ENCODE measurements at regions of chr3 and their contacts with region 1.

Region 1: DNA sequence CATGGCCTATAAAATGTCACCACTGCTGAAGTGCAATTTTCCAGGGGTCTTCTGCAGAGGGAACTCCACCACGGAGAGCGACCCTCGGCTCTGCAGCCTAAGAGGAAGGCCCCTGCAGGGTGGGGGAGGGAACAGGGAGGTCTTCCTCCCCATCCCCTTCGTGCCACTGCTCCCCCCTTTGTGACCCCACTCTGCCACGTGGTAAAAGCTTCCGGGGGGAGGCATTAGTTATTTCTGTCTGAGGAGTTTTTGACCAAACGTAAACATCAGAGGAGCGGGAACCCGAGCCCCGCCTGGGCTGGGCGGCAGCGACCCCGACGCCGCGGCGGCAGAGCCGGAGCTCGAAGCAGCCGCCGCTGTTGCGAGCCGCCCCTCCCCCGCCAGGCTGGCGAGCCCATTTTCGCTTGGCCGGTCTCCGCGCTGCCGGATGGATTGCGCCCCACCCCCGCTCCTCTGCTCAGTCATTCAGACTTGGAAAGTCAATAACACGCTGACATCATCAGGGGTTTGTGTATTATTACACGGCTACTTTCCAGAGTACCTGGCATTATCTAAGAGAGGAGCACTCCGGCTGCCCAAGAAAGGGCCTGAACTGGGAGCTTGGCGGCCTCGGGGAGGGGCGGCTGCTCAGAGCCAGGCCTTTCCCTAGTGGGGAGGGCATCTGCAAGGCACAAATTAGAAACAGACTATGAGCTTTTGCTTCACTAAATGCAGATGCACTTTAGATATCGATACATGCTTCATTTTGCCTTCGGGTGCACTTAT is 162.5 kb upstream of the TBL1XR1 start:
- DNase-seq: peak; percentile 98
- H3K4me3 ChIP-seq: peak overlapping the region; percentile 6 to 47 (median 37)
- H3K27ac ChIP-seq: peak overlapping the region; percentile 84 to 91 (median 88)
- H3K4me1 ChIP-seq: peaks cover 0 to 63% (median 58%) of the 10 kb centered on the region in 4 donors
- H3K27me3 ChIP-seq: no peaks in the 10 kb centered on the region
- CTCF ChIP-seq: no peak
- EP300 ChIP-seq: peak; percentile 88 to 98 (median 97)
- POLR2A ChIP-seq: peak in 1 of 2 donors; percentile 43

Region 2: GRCh38 chr3:177197041-177197727 is 162.6 kb before region 1 on chr3 and contains the start of gene TBL1XR1:
- intact Hi-C with region 1: loop called (anchors 1 kb)
- DNase-seq: peak; percentile 97
- H3K4me3 ChIP-seq: peak within 1 kb of the TSS; percentile 91 to 99 (median 97)
- H3K27ac ChIP-seq: peak within 1 kb of the TSS; percentile 98 to 100 (median 99)
- H3K4me1 ChIP-seq: peaks cover 0 to 42% (median 27%) of the 10 kb centered on the region in 4 donors
- H3K27me3 ChIP-seq: no peaks in the 10 kb centered on the region
- CTCF ChIP-seq: no peak
- EP300 ChIP-seq: peak; percentile 25 to 84 (median 69)
- POLR2A ChIP-seq: no peak
- total RNA-seq, gene TBL1XR1: 88.9 to 131 (median 102) TPM

Region 3: GRCh38 chr3:177597311-177598096 is 237.7 kb after region 1 on chr3:
- intact Hi-C with region 1: loop called (anchors 5 kb)
- DNase-seq: peak; percentile 84
- H3K4me3 ChIP-seq: peak overlapping the region in 2 of 4 donors; percentile 0 to 7
- H3K27ac ChIP-seq: peak overlapping the region; percentile 69 to 84 (median 79)
- H3K4me1 ChIP-seq: peaks cover 0 to 68% (median 55%) of the 10 kb centered on the region in 4 donors
- H3K27me3 ChIP-seq: no peaks in the 10 kb centered on the region
- CTCF ChIP-seq: no peak
- EP300 ChIP-seq: peak in 1 of 4 donors; percentile 26
- POLR2A ChIP-seq: no peak

Region 4: DNA sequence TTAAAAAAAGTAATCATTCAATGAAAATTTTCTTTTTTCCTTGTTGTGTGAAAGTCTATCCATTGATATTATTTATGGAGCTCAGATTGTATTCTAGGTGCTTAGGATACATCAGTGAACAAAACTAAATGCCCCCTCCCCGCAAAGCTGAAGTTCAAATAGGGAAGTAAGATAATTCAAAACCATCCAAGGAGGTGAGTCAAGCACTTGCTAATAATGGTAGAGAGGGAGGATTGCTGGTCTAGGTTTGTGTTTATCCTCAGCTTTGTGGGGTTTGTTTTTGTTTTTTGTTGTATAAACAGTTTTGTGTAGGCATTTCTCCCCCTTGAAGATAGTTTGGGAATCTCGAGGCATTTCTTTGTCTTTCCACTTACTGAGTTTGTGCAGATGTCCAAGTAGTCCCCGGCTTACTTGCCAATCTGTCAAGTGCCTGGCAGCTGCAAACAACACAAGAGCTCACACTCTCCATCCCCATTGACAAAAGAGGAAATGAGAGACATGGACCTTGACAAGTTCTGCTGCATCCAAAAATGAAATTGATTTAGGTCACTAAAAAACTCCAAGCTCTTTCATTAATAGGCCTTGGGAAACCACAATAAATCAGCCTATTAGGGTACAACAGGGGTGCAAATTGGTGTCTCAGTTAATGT is 413.3 kb after region 1 on chr3:
- intact Hi-C with region 1: loop called (anchors 5 kb)
- DNase-seq: no peak
- H3K4me3 ChIP-seq: no peak overlapping the region
- H3K27ac ChIP-seq: peak overlapping the region in 1 of 4 donors; percentile 81
- H3K4me1 ChIP-seq: peaks cover 0 to 50% (median 32%) of the 10 kb centered on the region in 4 donors
- H3K27me3 ChIP-seq: no peaks in the 10 kb centered on the region
- CTCF ChIP-seq: no peak
- EP300 ChIP-seq: no peak
- POLR2A ChIP-seq: no peak

Region 5: DNA sequence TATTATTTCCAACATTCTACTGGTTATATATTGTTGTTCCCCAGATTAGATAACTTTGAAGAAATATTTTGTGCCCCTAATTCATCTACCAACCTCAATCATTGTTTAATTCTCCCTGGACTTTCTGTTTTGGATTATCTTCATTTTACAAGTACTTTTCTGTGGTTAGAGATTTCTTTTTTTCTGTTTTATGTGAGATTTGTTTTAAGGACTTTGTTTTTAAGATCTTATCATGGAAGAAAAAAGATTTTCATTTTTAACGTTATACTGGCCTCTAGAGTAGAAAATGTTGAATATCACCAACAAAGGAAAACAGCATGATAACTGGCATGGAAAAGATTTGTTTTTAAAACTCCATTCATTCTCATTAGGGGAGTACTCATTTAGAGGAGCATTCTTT is 965.6 kb after region 1 on chr3:
- intact Hi-C with region 1: loop called (anchors 5 kb)
- DNase-seq: no peak
- H3K4me3 ChIP-seq: no peak overlapping the region
- H3K27ac ChIP-seq: peak overlapping the region in 2 of 4 donors; percentile 5 to 33
- H3K4me1 ChIP-seq: peaks cover 0 to 26% (median 19%) of the 10 kb centered on the region in 4 donors
- H3K27me3 ChIP-seq: no peaks in the 10 kb centered on the region
- CTCF ChIP-seq: peak in 2 of 4 experiments; percentile 36 to 47
- EP300 ChIP-seq: no peak
- POLR2A ChIP-seq: no peak

Measured in sigmoid colon (tissue), 7 donors.